ENCODE measurements at regions of chr16 and their contacts with region 1.

Region 1: GRCh38 chr16:81823111-81823510 is 44.0 kb downstream of the PLCG2 start:
- DNase-seq: peak; percentile 91
- H3K4me3 ChIP-seq: peak overlapping the region; percentile 64
- H3K27ac ChIP-seq: peak overlapping the region; percentile 97
- H3K4me1 ChIP-seq: peaks cover 94% of the 10 kb centered on the region
- CTCF ChIP-seq: 0 out of 2 replicates have a peak, but pooled peaks have one; percentile 18

Region 2: GRCh38 chr16:81767987-81768592 is 55.0 kb before region 1 on chr16:
- CTCF ChIA-PET with region 1: no interaction called
- POLR2A ChIA-PET with region 1: no interaction called
- intact Hi-C with region 1: no loop called
- DNase-seq: no peak
- H3K4me3 ChIP-seq: no peak overlapping the region
- H3K27ac ChIP-seq: no peak overlapping the region
- H3K4me1 ChIP-seq: peaks cover 26% of the 10 kb centered on the region
- CTCF ChIP-seq: no peak

Region 3: GRCh38 chr16:81808933-81809496 is 14.1 kb before region 1 on chr16:
- CTCF ChIA-PET with region 1: interaction called, 10 read pairs
- POLR2A ChIA-PET with region 1: interaction called, 63 read pairs
- intact Hi-C with region 1: loop called (anchors 1 kb)
- DNase-seq: peak; percentile 95
- H3K4me3 ChIP-seq: peak overlapping the region; percentile 50
- H3K27ac ChIP-seq: peak overlapping the region; percentile 95
- H3K4me1 ChIP-seq: peaks cover 92% of the 10 kb centered on the region
- CTCF ChIP-seq: no peak

Region 4: DNA sequence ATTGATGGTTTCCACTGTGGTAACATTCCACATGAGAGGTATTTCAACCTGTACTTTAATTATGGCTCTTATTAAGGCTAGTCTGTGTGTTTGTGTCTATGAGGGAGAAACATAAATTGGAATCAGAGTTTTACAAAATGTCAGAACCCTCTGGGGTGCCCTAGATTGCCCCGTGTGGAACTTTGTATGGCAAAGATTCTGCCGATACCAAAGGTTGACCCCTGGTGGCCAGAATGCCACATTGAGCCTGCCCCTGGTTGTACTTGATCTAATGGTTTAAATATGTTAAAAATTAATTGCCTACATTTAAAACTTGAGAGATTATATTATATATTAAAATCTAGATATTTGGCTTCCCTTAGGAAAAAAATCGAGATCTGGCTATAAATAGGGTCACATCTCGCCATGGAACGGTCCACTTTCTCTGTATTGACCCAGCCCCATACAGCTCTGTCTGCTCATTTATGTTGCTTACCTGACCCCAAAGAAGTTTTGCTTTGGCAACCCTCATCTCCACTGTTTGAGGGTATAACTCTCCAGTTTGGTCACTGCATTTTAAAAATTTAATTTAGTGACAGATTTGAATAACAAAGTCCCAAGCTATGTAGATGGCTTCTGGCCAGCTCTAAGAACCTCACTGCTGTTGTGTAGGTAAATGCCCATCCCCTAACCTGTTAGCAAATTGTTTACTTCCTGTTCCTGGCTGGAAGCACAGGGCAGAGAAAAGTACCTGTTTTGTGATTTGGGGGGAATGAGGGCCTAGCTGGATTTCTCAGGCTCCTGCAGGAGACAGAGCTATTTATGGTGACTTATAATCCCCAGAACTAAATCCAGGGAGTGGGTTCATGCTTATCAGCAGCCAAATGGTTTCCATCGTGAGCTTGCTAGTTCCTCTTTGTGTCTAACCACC is 51.0 kb after region 1 on chr16:
- CTCF ChIA-PET with region 1: no interaction called
- POLR2A ChIA-PET with region 1: interaction called, 7 read pairs
- intact Hi-C with region 1: loop called (anchors 5 kb)
- DNase-seq: peak; percentile 81
- H3K4me3 ChIP-seq: no peak overlapping the region
- H3K27ac ChIP-seq: peak overlapping the region; percentile 47
- H3K4me1 ChIP-seq: peaks cover 44% of the 10 kb centered on the region
- CTCF ChIP-seq: peak; percentile 98

Region 5: GRCh38 chr16:82091241-82091640 is 268.1 kb after region 1 on chr16:
- CTCF ChIA-PET with region 1: no interaction called
- POLR2A ChIA-PET with region 1: no interaction called
- intact Hi-C with region 1: no loop called
- DNase-seq: no peak
- H3K4me3 ChIP-seq: no peak overlapping the region
- H3K27ac ChIP-seq: no peak overlapping the region
- H3K4me1 ChIP-seq: no peaks in the 10 kb centered on the region
- CTCF ChIP-seq: no peak